ENCODE measurements at regions of chr21 and their contacts with region 1.

Region 1: DNA sequence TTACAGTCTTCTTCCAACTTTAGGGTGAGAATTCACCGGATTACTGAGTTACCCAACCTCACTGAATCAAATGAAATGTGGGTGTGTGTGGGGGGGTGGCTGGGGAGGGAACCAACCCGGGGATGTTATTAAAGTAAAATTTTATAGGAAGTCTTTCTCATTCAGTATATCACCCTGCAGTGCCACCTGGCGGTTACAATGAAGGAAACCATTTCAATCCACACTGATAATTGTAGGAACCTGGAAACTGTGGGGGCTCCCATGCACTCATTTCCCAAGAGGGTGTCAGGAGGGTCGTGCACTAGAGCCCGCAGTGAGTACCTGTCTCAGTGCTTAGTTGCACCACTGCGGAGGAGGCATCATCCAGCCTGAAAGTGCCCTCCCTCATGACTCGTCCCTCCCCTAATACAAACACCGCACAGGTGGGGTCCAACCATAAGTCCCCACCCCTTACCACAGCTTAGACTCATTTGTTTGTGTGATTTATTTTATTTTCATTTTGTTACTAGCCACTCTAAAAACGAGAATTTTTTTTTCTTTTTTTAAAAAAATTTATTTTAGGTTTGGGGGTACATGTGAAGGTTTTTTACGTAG is 29.1 kb upstream of the IGSF5 start:
- DNase-seq: no peak
- H3K4me3 ChIP-seq: no peak overlapping the region
- H3K27ac ChIP-seq: no peak overlapping the region
- H3K4me1 ChIP-seq: no peaks in the 10 kb centered on the region
- H3K27me3 ChIP-seq: peaks cover 0 to 6% (median 0%) of the 10 kb centered on the region in 4 donors
- CTCF ChIP-seq: peak; percentile 26 to 61 (median 56)
- POLR2A ChIP-seq: no peak

Region 2: GRCh38 chr21:39518138-39518846 is 197.6 kb before region 1 on chr21:
- intact Hi-C with region 1: loop called (anchors 5 kb)
- DNase-seq: no peak
- H3K4me3 ChIP-seq: no peak overlapping the region
- H3K27ac ChIP-seq: no peak overlapping the region
- H3K4me1 ChIP-seq: peaks cover 0 to 6% (median 0%) of the 10 kb centered on the region in 3 donors
- H3K27me3 ChIP-seq: no peaks in the 10 kb centered on the region
- CTCF ChIP-seq: peak; percentile 75 to 89 (median 80)
- POLR2A ChIP-seq: no peak

Region 3: GRCh38 chr21:39527664-39528381 is 188.1 kb before region 1 on chr21:
- intact Hi-C with region 1: loop called (anchors 5 kb)
- DNase-seq: no peak
- H3K4me3 ChIP-seq: no peak overlapping the region
- H3K27ac ChIP-seq: peak overlapping the region in 1 of 4 donors; percentile 24
- H3K4me1 ChIP-seq: peaks cover 0 to 16% (median 3%) of the 10 kb centered on the region in 3 donors
- H3K27me3 ChIP-seq: peaks cover 0 to 11% (median 0%) of the 10 kb centered on the region in 4 donors
- CTCF ChIP-seq: no peak
- POLR2A ChIP-seq: no peak

Region 4: GRCh38 chr21:39581414-39581813 is 134.5 kb before region 1 on chr21:
- intact Hi-C with region 1: no loop called
- DNase-seq: no peak
- H3K4me3 ChIP-seq: no peak overlapping the region
- H3K27ac ChIP-seq: no peak overlapping the region
- H3K4me1 ChIP-seq: no peaks in the 10 kb centered on the region
- H3K27me3 ChIP-seq: peaks cover 0 to 3% (median 0%) of the 10 kb centered on the region in 4 donors
- CTCF ChIP-seq: no peak
- POLR2A ChIP-seq: no peak

Region 5: DNA sequence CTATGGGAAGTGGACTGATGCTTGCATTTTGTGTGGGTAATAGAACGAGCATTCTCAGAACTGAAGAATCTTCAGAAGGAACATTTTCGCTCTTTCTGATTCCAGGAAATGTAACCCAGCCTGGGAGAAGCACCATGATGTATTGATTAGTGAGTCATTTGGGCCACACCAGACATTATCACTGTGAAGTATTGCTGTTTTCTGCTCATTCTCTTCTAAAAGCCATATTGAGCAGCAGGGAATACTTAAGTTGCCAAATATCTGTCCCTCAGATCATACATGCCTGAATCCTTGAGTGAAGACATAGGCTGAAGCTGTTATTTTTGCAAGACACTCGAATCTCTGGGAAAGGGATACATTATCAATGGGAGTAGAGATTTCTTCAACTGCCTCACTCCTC is 364.5 kb after region 1 on chr21:
- intact Hi-C with region 1: no loop called
- DNase-seq: no peak
- H3K4me3 ChIP-seq: no peak overlapping the region
- H3K27ac ChIP-seq: no peak overlapping the region
- H3K4me1 ChIP-seq: no peaks in the 10 kb centered on the region
- H3K27me3 ChIP-seq: no peaks in the 10 kb centered on the region
- CTCF ChIP-seq: no peak
- POLR2A ChIP-seq: no peak

Measured in esophagus squamous epithelium (tissue), 5 donors.